Activated T-helper 1 cell treated with anti-CD3 and anti-CD28 coated beads, Interleukin-12 subunit alpha, Interleukin-12 subunit beta, Interleukin-2, Interleukin-4 antibody, amounts not matched to agents 30 ng/mL and 10 ng/mL and 1 ng/mL, durations not matched to agents 14 hours and 24 hours and 36 hours (primary cell): ENCODE measurements at regions of chr5 and their contacts with region 1.

Region 1: GRCh38 chr5:132526290-132526973 is 16.9 kb downstream of the IL5 start:
- DNase-seq: peak; percentile 48
- H3K4me3 Mint-ChIP-seq: no peak overlapping the region
- H3K27ac Mint-ChIP-seq: peak overlapping the region; percentile 26
- H3K4me1 Mint-ChIP-seq: peaks cover 64% of the 10 kb centered on the region
- H3K27me3 Mint-ChIP-seq: peaks cover under 1% of the 10 kb centered on the region

Region 2: DNA sequence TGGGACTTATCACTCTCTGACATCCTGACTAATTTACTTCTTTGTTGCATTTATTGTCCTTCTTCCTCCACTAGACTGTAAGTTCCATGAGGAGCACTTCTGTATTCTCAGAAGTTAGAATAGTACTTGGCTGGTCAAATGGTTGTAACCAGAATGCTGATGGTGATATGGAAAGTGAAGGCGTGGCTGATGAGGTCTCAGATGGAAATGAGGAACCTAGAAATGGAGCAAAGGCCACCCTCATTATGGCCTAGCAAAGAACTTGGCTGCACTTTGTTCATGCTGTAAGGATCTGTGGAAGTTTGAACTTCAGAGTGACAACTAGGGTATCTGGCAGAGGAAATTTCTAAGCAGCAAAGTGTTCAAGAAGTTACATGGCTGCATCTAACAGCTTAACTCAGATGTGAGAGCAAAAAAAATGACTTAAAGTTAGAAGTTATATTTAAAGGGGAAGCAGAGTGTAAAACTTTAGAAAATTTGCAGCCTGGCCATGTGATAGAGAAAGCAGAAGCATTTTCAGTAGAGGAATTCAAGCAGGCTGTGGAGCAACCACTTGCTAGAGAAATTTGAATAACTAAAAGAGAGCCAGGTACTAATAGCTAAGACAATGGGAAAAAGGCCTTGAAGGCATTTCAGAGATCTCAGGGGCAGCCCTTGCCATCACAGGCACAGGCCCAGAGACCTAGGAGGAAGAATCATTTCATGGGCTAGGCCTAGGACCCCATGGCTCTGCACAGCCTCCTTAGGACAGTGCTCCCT is 171.9 kb before region 1 on chr5:
- intact Hi-C with region 1: no loop called
- DNase-seq: no peak
- H3K4me3 Mint-ChIP-seq: no peak overlapping the region
- H3K27ac Mint-ChIP-seq: no peak overlapping the region
- H3K4me1 Mint-ChIP-seq: no peaks in the 10 kb centered on the region
- H3K27me3 Mint-ChIP-seq: peaks cover 14% of the 10 kb centered on the region

Region 3: DNA sequence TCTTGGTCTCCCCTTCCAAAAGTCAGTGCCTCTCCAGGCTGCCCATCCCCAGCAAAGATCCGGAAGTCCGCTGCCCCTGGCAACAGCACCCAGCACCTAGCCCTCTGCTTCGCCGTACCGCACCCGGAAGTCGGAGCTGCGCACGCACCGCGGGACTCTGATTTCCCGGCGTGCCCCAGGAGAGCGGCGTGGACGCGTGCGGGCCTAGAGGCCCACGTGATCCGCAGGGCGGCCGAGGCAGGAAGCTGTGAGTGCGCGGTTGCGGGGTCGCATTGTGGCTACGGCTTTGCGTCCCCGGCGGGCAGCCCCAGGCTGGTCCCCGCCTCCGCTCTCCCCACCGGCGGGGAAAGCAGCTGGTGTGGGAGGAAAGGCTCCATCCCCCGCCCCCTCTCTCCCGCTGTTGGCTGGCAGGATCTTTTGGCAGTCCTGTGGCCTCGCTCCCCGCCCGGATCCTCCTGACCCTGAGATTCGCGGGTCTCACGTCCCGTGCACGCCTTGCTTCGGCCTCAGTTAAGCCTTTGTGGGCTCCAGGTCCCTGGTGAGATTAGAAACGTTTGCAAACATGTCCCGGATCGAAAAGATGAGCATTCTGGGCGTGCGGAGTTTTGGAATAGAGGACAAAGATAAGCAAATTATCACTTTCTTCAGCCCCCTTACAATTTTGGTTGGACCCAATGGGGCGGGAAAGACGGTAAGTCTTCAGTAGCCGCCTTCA is 30.5 kb after region 1 on chr5 and contains the start of gene RAD50:
- intact Hi-C with region 1: loop called (anchors 1 kb)
- DNase-seq: peak; percentile 92
- H3K4me3 Mint-ChIP-seq: peak within 1 kb of the TSS; percentile 98
- H3K27ac Mint-ChIP-seq: peak within 1 kb of the TSS; percentile 91
- H3K4me1 Mint-ChIP-seq: peaks cover 32% of the 10 kb centered on the region
- H3K27me3 Mint-ChIP-seq: peaks cover 4% of the 10 kb centered on the region
- total RNA-seq, gene RAD50: 30.9 and 33.0 TPM in 2 replicates

Region 4: DNA sequence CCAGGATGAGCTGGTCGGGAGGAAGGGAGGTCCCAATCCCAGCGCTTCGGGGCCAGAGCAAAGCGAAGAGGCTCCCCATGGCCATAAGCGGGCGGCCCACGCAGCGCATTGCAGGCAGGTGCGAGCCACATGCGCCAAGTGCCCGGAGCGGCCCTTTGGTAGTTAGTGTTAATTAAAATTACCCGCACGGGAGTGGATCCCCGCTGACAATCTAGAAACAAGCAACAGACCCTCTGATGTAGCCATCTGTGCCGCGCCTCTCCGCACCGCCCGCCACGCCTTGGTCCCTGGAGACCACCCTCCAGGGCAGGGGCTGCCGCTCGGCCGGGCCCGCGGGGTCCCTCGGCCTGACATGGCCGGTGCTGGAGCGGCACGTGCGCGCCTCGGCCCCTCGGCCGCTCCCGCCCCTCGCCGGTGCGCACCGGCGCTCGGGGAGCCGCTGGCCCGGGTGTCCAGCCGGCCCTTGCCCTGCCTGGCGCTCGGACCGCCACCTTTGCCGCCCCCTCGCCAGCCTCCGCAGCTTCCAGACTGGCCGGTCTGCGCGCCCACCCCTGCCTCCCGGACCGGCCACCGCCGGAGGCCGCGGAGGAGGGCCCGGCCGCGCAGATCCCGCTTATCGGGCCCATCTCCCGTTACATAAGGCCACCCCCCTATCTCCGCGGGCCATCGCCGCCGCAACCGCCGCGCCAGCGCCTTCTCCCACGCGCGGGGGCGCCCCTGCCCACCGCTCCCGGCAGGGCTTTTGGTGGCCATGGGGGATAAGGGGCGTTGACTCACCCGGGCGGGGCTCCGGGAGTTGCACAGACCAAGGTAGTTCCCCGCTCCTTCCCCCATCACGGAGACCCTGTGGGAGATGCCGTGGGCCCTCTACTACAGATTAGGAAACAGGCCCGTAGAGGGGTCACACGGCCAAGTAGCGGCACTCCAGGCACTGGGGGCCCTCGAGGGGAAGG is 129.7 kb after region 1 on chr5:
- intact Hi-C with region 1: loop called (anchors 5 kb)
- DNase-seq: no peak
- H3K4me3 Mint-ChIP-seq: peak overlapping the region; percentile 76
- H3K27ac Mint-ChIP-seq: peak overlapping the region; percentile 87
- H3K4me1 Mint-ChIP-seq: peaks cover 71% of the 10 kb centered on the region
- H3K27me3 Mint-ChIP-seq: peaks cover 19% of the 10 kb centered on the region

Region 5: DNA sequence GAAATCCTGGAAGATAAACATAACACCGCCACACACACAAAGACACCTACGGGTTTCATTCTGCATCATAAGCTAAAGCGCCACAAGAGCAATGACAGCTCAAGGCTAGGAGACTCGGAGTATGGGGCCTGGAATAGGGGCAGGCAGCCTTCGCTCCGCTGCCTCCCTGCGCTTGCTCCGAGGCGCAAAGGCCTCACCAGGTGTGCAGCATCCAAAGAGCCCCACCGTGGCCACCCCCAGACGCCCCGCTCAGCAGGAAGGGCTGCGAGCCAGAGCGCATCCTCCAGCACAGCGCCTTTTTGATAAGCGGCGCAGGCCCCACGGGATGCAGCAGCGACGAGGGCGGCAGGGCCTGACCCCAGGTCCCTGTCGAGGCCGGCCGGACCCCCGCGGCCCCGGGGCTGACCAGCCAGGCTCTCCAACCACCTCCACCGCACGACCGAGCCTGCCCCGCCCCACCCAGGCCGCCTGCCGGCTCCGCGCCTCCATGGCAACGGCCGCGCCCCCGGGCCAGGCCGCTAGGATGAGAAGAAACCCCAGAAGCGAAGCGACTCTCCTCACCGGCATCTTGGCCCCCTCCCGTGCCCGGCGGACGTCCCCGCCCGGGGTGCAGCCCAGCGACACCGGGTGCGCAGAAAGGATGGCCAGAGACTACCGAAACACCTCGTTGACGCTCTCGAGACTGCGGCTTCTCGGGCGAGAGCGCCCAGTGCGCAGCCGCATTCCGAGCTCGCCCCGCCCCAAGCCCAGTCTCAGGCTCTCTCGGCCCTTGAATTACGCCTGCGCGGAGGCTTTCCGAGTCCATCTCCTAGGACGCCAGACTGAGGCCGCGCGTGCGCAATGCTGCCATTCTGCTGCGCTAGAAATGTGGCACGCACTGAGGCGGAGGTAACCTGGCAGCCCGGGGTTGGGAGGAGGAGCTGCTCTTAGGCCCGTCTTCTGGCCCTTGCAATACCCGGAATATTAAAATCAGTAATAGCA is 210.7 kb after region 1 on chr5 and contains the start of gene KIF3A:
- intact Hi-C with region 1: loop called (anchors 1 kb)
- DNase-seq: peak; percentile 98
- H3K4me3 Mint-ChIP-seq: peak within 1 kb of the TSS; percentile 87
- H3K27ac Mint-ChIP-seq: peak within 1 kb of the TSS; percentile 93
- H3K4me1 Mint-ChIP-seq: peaks cover 55% of the 10 kb centered on the region
- H3K27me3 Mint-ChIP-seq: peaks cover 10% of the 10 kb centered on the region
- total RNA-seq, gene KIF3A: 58.5 and 66.9 TPM in 2 replicates

Region 6: GRCh38 chr5:132820162-132820754 is 293.8 kb after region 1 on chr5:
- intact Hi-C with region 1: loop called (anchors 1 kb)
- DNase-seq: peak; percentile 82
- H3K4me3 Mint-ChIP-seq: no peak overlapping the region
- H3K27ac Mint-ChIP-seq: no peak overlapping the region
- H3K4me1 Mint-ChIP-seq: peaks cover 29% of the 10 kb centered on the region
- H3K27me3 Mint-ChIP-seq: peaks cover 45% of the 10 kb centered on the region